Activated naive CD4-positive, alpha-beta T cell treated with anti-CD3 and anti-CD28 coated beads for 36 hours (primary cell): ENCODE measurements at regions of chr1 and their contacts with region 1.

Region 1: GRCh38 chr1:244970661-244971551 is 106.6 kb upstream of the HNRNPU start:
- DNase-seq: peak; percentile 93
- H3K4me3 Mint-ChIP-seq: peak overlapping the region; percentile 93
- H3K27ac Mint-ChIP-seq: peak overlapping the region; percentile 98
- H3K4me1 Mint-ChIP-seq: peaks cover 11% of the 10 kb centered on the region
- H3K27me3 Mint-ChIP-seq: no peaks in the 10 kb centered on the region

Region 2: DNA sequence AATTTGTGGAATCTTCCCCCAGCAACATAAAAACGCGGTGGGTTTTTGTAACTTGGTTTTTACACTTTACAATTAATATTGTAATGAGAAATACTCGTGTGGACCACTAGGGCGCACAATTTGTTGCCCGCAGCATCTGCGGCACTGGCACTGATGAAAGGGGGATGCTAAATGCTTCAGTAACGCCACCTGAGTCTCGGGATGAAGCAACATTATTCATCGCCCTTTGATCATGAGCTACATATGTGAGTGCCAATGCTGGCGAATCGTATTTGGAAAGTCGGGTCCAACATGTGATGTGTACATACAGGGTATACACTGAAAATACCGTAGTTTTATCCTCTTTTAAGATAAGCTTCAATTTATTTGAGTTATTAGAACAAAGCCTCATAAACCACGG is 169.7 kb before region 1 on chr1:
- CTCF ChIA-PET with region 1: interaction called, 3 read pairs
- intact Hi-C with region 1: loop called (anchors 1 kb)
- DNase-seq: peak; percentile 74
- H3K4me3 Mint-ChIP-seq: no peak overlapping the region
- H3K27ac Mint-ChIP-seq: no peak overlapping the region
- H3K4me1 Mint-ChIP-seq: peaks cover 2% of the 10 kb centered on the region
- H3K27me3 Mint-ChIP-seq: no peaks in the 10 kb centered on the region

Region 3: GRCh38 chr1:244918421-244919319 is 52.2 kb before region 1 on chr1:
- CTCF ChIA-PET with region 1: no interaction called
- intact Hi-C with region 1: loop called (anchors 2 kb)
- DNase-seq: peak; percentile 44
- H3K4me3 Mint-ChIP-seq: peak overlapping the region; percentile 77
- H3K27ac Mint-ChIP-seq: peak overlapping the region; percentile 30
- H3K4me1 Mint-ChIP-seq: peaks cover 11% of the 10 kb centered on the region
- H3K27me3 Mint-ChIP-seq: no peaks in the 10 kb centered on the region

Region 4: GRCh38 chr1:245051349-245052221 is 80.7 kb after region 1 on chr1:
- CTCF ChIA-PET with region 1: interaction called, 3 read pairs
- intact Hi-C with region 1: loop called (anchors 2 kb)
- DNase-seq: peak; percentile 65
- H3K4me3 Mint-ChIP-seq: peak overlapping the region; percentile 40
- H3K27ac Mint-ChIP-seq: no peak overlapping the region
- H3K4me1 Mint-ChIP-seq: peaks cover 16% of the 10 kb centered on the region
- H3K27me3 Mint-ChIP-seq: peaks cover 6% of the 10 kb centered on the region